Ascending aorta (tissue), 2 donors: ENCODE measurements at regions of chrX and their contacts with region 1.

Region 1: DNA sequence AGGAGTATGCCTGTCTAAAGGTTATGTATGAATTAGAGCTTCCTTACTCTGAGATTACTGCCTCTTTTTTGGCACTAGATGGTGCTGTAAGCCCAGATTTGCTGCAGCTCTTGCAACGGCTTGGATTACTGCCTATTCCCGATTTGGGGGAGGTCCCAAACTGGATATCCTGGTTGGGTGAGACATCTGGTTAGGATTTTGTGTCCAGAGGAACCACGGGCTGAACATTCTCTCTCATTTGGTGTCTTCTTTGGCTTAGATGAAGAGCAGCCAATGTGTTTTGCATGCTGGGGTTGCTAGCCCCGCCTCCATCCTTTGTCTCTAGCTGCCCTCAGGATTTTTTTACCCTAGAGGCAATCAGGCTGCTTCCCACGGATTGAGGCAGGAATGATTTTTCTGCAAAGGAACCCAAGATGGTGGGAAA is 31.9 kb downstream of the F8A1 start:
- DNase-seq: peak in 1 of 2 donors; percentile 67
- H3K4me3 ChIP-seq: peak overlapping the region; percentile 37 to 44
- H3K27ac ChIP-seq: no peak overlapping the region
- H3K4me1 ChIP-seq: no peaks in the 10 kb centered on the region
- H3K27me3 ChIP-seq: no peaks in the 10 kb centered on the region
- CTCF ChIP-seq: peak; percentile 21 to 58 (median 36)

Region 2: DNA sequence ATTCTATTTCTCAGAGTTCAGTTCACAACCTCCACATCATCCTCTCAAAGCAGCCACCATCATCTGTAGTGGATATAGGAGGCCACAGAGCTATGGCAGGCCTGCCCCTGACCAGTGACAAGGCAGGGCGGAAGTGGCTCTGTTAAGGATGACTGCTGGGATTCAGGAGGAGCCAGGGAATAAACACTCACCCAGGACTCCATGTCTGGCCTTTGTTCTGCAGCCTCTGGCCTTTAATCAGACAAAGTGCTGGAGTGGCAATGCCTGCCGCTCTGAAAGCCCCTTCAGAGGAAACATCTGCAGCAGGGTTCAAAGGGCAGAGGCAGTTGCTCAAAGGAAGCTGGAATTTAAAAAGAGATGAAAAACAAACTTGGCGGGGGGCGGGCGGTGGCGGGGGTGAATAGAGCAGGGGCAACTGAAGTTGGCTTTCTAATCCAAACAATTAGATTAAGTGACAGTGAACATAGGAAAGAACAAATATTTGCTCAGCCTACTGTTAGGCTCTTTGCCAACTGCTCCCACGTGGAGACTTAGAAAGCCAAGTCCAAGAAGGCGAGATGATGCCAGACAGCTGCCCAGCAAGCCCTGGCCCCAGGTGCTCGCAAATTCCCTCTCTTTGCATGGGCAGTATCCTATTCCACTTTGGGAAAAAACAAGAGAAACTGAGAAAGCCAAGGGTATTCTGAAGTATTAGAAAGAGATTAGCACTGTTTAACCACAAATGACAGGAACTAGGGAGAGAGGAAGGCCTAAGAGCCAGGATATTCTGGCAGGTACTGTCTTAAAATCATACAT is 118.3 kb before region 1 on chrX:
- intact Hi-C with region 1: no loop called
- DNase-seq: no peak
- H3K4me3 ChIP-seq: no peak overlapping the region
- H3K27ac ChIP-seq: peak overlapping the region; percentile 31 to 45
- H3K4me1 ChIP-seq: no peaks in the 10 kb centered on the region
- H3K27me3 ChIP-seq: no peaks in the 10 kb centered on the region
- CTCF ChIP-seq: no peak

Region 3: GRCh38 chrX:155148724-155149537 is 230.9 kb after region 1 on chrX:
- intact Hi-C with region 1: loop called (anchors 5 kb)
- DNase-seq: no peak
- H3K4me3 ChIP-seq: peak overlapping the region in 1 of 2 donors; percentile 5
- H3K27ac ChIP-seq: no peak overlapping the region
- H3K4me1 ChIP-seq: no peaks in the 10 kb centered on the region
- H3K27me3 ChIP-seq: no peaks in the 10 kb centered on the region
- CTCF ChIP-seq: peak in 2 of 3 experiments; percentile 38 to 56